ENCODE measurements at regions of chr19 and their contacts with region 1.

Region 1: GRCh38 chr19:38647368-38647965 is at the start of gene ACTN4:
- DNase-seq: peak; percentile 99 to 100 (median 100)
- ATAC-seq: peak; percentile 79 to 92 (median 88)
- H3K4me3 ChIP-seq: peak within 1 kb of the TSS; percentile 62 to 100 (median 92)
- H3K27ac ChIP-seq: peak within 1 kb of the TSS; percentile 73 to 99 (median 96)
- H3K4me1 ChIP-seq: peaks cover 14 to 39% (median 31%) of the 10 kb centered on the region in 12 donors
- H3K27me3 ChIP-seq: no peaks in the 10 kb centered on the region
- CTCF ChIP-seq: no peak
- POLR2A ChIP-seq: peak; percentile 98 to 100
- total RNA-seq, gene ACTN4: 124 to 307 (median 154) TPM

Region 2: GRCh38 chr19:38693380-38694223 is 46.1 kb after region 1 on chr19:
- intact Hi-C with region 1: loop called in 1 of 10 experiments (anchors 5 kb)
- DNase-seq: peak in 3 of 5 donors; percentile 61 to 70 (median 68)
- ATAC-seq: peak in 3 of 4 donors; percentile 21 to 48 (median 37)
- H3K4me3 ChIP-seq: peak overlapping the region in 3 of 12 donors; percentile 5 to 13 (median 11)
- H3K27ac ChIP-seq: peak overlapping the region; percentile 74 to 96 (median 90)
- H3K4me1 ChIP-seq: peaks cover 30 to 100% (median 88%) of the 10 kb centered on the region in 12 donors
- H3K27me3 ChIP-seq: no peaks in the 10 kb centered on the region
- CTCF ChIP-seq: no peak
- POLR2A ChIP-seq: no peak

Region 3: DNA sequence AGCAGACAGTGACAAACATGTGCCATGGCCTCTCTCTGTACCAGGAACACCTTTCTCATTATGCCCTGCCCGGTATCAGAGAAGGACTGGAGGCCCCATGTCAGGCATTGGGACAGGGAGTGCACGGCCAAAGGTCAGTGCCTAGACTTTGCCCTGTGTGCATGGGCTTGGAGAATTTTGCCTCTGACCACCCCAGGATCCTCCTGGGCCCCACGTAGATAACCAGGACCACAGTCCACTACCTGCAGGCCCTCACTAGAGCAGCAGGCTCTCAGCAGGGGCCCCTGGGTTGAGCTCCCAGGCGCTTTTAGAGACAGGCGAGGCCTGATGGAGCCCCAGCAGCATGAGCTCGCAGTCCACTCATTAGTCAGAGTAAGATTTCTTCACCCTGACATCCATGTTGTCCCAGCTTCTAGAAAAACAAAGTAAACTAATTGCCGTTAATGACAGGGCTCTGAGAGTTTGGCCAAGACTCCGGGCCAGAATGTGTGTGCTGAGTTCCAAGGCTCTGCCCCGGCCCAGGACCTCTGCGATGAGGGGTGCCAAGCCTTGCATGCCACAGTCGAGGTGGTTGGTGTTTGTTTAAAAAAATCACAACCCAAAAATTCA is 54.1 kb after region 1 on chr19:
- intact Hi-C with region 1: loop called in 6 of 10 experiments (anchors 5 kb)
- DNase-seq: no peak
- ATAC-seq: no peak
- H3K4me3 ChIP-seq: no peak overlapping the region
- H3K27ac ChIP-seq: peak overlapping the region in 11 of 12 donors; percentile 27 to 96 (median 56)
- H3K4me1 ChIP-seq: peaks cover 15 to 100% (median 78%) of the 10 kb centered on the region in 12 donors
- H3K27me3 ChIP-seq: no peaks in the 10 kb centered on the region
- CTCF ChIP-seq: no peak
- POLR2A ChIP-seq: no peak

Region 4: DNA sequence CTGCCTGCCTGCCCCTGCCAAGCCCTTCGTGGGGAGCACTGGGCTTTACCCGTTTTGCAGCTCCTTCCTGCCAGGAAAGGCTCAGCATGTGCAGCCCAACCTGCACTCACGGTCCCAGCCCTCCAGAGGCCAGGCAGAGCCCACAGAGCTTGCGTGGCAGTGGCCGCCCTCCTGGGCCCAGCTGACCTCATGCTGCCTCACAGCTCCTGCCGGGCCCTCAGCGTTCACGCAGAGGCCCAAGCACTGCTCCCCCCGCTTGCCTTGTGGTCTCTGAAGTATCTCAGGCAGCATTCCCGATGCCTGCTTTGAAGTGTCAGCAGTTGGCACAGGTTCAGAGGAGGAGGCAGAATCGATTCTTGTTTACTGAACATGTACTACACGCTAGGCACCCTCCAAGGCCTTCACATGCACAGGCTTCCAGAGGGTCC is 64.3 kb after region 1 on chr19:
- intact Hi-C with region 1: loop called in 7 of 10 experiments (anchors 5 kb)
- DNase-seq: peak in 4 of 5 donors; percentile 55 to 82 (median 78)
- ATAC-seq: peak; percentile 10 to 69 (median 36)
- H3K4me3 ChIP-seq: no peak overlapping the region
- H3K27ac ChIP-seq: peak overlapping the region; percentile 69 to 98 (median 84)
- H3K4me1 ChIP-seq: peaks cover 49 to 100% (median 84%) of the 10 kb centered on the region in 12 donors
- H3K27me3 ChIP-seq: no peaks in the 10 kb centered on the region
- CTCF ChIP-seq: no peak
- POLR2A ChIP-seq: no peak

Region 5: DNA sequence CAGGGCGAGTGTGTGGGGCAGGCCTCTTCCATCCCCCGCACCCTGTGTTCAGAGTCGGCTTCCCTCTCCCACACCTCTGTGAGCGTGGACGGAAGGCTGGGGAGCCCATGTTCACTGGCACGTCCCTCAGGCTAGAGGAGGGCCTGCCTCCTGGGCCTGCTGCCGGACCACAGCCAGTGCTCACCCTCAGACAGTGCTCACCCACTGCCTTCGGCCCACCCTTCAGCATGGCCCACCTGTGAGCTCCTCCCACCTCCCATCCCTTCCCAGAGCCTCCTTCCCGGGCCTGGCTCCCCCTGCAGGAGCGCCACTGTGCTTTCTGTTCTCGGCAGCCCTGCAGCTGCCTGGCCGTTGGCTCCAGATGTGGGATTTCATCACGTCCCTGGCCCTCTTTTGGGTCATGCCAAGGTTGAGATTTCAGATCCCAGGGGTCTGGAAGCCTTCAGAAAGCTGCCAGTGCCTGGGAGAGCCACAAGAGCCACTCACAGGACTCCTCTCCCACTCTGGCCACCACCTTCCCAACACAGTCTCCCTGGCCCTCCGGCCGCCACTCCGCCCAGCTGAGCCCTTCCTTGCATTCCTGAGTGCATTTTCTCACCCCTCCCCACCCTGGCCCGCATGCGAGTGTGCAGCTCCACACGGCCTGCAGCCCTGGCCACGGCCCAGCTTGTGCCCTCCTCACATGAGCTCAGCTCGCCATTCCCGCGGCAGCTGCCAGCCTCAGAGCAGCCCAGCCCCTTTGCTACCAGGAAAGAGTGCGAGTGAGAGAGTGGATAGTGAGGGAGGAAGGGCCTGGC is 71.5 kb after region 1 on chr19:
- intact Hi-C with region 1: loop called in 5 of 10 experiments (anchors 2 to 5 kb)
- DNase-seq: peak; percentile 70 to 88 (median 83)
- ATAC-seq: peak; percentile 28 to 56 (median 44)
- H3K4me3 ChIP-seq: no peak overlapping the region
- H3K27ac ChIP-seq: peak overlapping the region; percentile 60 to 98 (median 89)
- H3K4me1 ChIP-seq: peaks cover 22 to 96% (median 68%) of the 10 kb centered on the region in 12 donors
- H3K27me3 ChIP-seq: no peaks in the 10 kb centered on the region
- CTCF ChIP-seq: peak; percentile 17 to 59 (median 40)
- POLR2A ChIP-seq: peak in 1 of 2 donors; percentile 11

Region 6: DNA sequence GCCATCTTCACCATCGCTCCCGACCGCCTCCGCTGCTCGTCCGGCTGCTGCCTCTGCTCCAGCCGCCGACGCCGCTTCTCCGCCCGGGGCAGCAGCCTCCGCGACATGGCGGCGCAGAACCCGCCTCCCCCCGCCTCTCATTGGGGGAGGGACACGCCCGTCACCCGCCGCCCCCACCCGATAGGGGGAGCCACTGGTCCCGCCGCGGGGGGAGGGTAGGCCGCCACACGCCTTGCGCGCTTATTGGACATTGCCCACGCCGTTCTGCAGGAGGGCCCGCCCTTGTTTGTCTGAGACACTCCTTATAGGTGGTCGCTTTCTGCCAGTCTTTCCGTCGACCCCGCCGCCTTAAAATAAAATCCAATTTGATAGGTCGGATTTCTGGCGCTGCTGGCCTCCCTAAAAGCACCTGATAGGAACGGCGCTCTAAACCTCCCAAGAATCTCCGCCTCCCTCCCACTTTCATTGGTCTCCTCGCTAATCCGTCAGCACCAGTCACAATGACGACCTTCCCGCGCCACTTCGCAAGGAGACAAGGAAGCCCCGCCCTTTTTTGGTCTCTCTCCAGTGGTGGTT is 202.5 kb after region 1 on chr19 and contains the start of gene HNRNPL:
- intact Hi-C with region 1: loop called in 2 of 10 experiments (anchors 5 kb)
- DNase-seq: peak; percentile 99 to 100 (median 100)
- ATAC-seq: peak; percentile 79 to 85 (median 81)
- H3K4me3 ChIP-seq: peak within 1 kb of the TSS; percentile 83 to 100 (median 95)
- H3K27ac ChIP-seq: peak within 1 kb of the TSS; percentile 99 to 100 (median 100)
- H3K4me1 ChIP-seq: peaks cover 9 to 59% (median 46%) of the 10 kb centered on the region in 12 donors
- H3K27me3 ChIP-seq: no peaks in the 10 kb centered on the region
- CTCF ChIP-seq: peak; percentile 21 to 81 (median 56)
- POLR2A ChIP-seq: peak; percentile 40 to 90
- total RNA-seq, gene HNRNPL: 93.6 to 256 (median 165) TPM

Measured in heart left ventricle (tissue), 16 donors.